ENCODE measurements at regions of chr6 and their contacts with region 1.

Region 1: DNA sequence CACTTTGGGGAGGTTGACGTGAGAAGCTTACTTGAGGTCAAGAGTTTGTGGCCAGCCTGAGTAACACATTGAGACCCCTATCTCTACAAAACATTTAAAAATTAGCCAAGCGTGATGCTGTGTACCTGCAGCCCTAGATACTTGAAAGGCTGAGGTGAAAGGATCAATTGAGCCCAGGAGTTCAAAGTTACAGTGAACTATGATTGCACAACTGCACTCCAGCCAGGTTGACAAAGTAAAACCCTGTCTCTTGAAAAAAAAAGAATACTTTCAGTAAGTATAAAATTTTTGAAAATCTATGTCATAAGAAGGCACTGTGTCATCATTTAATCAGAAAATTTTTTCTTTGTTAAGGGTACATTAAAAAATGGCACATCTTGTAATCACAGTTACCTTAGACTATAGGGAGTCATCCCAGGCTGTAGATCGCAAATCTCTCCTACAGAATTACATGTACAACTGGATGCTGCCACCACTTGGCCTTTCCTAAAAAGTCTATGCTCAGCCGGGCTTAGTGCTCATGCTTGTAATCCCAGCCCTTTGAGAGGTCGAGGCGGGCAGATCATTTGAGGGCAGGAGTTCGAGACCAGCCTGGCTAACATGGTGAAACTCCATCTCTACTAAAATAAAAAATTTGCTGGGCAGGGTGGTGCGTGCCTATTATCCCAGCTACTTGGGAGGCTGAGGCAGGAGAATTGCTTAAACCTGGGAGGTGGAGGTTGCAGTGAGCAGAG is 17.0 kb upstream of the MRS2 start:
- DNase-seq: no peak
- H3K4me3 ChIP-seq: no peak overlapping the region
- H3K4me1 ChIP-seq: no peaks in the 10 kb centered on the region
- H3K27me3 ChIP-seq: 0 out of 2 replicates have a peak, but pooled peaks cover 3% of the 10 kb centered on the region

Region 2: DNA sequence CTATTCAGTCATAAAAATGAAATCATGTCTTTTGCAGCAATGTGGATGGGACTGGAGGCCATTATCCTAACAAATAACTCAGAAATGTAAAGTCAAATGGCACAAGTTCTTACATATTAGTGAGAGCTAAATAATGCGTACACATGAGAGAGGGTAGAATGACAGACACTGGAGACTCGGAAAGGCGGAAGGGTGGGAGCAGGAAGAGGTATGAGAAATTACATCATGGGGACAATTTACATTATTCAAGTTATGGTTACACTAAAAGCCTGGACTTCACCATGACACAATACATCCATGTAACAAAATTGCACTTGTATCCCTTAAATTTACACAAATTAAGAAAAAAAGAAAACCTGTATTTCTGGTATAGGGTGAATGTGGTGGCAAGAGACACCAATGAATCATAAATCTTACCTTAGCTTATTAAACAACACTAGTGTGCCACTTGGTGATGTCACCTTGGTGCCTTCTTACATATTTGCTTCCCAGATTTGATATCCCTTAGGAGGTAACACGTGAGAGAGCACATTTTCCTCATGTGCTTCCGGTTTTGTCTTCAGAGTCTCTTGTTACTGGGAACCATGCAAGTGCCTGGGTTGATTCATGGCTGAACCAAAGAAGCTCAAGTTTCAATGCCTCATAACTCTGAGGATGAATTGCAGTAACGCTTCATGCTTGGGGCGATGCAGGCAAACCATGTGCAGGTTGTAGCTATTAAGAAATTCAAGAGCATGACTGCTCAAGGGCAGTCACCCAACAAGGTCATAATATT is 112.4 kb before region 1 on chr6:
- in situ Hi-C with region 1: no loop called
- DNase-seq: no peak
- H3K4me3 ChIP-seq: no peak overlapping the region
- H3K4me1 ChIP-seq: no peaks in the 10 kb centered on the region
- H3K27me3 ChIP-seq: peaks cover 15% of the 10 kb centered on the region

Region 3: GRCh38 chr6:24283043-24283985 is 102.4 kb before region 1 on chr6:
- in situ Hi-C with region 1: loop called (anchors 10 kb)
- DNase-seq: peak; percentile 62 to 74
- H3K4me3 ChIP-seq: no peak overlapping the region
- H3K4me1 ChIP-seq: no peaks in the 10 kb centered on the region
- H3K27me3 ChIP-seq: peaks cover 15% of the 10 kb centered on the region